ENCODE measurements at regions of chr6 and their contacts with region 1.

Region 1: DNA sequence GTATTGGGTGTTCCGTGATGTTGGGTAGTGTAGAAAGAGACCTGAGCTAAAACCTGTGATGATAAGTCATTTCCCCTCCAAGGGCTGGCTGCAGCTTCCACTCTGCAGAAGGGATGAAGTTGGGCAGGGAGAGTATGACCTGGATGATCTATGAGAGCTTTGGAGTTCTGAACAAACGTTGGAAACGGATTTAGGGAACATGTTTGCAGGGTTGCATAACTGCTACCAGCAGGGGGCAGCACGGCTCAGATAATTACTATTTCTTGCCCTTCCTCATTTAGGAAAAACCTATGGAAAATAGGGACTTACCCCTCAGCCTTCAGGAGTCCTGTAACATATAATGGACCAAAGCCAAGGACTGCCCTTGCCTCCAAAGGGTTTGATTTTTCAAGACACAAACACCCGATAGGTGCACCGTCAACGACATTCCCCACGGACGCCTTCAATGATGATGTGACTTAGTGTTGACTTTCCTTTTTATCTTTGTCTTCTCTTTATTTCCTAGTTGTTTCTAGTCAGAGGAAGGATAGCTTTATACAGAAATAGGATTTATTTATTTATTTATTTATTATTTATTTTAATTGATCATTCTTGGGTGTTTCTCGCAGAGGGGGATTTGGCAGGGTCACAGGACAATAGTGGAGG is 164.9 kb upstream of the SASH1 start:
- DNase-seq: peak; percentile 84
- ATAC-seq: peak; percentile 41

Region 2: DNA sequence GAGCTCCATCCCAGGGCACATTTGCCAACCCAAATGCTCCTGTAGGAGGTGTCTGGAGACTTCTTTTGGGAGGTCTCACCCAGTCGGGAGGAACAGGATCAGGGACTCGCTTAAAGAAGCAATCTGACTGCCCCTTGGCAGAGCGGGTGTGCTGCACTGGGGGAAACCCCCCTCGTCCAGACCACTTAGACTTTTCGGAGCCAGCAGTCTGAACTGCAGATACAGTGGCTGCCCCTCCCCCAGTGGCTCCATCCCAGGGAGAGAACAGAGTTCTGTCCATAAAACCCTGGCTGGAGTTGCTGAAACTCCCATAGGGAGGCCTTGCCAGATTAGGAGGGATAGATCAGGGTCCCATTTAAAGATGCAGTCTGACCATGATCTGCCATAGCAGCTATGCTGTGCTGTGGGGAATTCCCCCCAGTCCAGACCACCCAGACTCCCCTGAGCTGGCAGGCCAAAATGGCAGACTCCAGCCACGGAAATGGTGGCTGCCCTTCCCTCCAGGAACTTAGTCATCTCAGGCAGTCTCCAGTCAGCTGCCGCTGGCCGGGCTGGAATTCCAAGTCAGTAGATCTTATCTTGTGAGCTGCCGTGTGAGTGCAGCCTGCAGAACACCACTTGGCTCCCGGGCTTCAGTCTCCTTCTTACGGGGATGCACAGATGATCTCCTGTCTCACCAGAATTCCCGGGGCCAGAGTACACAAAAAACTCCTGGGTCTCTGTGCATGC is 113.1 kb before region 1 on chr6:
- intact Hi-C with region 1: no loop called
- DNase-seq: no peak
- ATAC-seq: no peak

Region 3: GRCh38 chr6:148203970-148204369 is 26.3 kb after region 1 on chr6:
- intact Hi-C with region 1: no loop called
- DNase-seq: no peak
- ATAC-seq: peak; percentile 45

Region 4: DNA sequence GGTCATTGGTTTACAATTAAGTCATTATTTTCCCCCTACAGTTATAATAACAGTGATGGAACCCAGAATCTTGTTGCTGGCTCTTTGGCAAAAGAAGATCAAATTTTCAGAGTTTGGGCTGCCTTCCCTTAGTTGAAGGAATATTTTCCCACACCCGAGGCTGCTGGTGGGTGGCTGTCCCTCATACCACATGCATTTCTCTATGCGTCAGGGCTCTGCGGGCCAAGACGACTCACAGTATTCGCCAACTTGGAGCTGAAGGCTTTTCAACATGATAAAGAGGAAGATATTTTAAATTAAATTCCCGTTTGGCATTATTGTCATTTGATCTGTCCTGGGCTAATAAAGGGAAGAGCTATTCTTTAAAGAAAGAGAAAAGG is 62.7 kb after region 1 on chr6:
- intact Hi-C with region 1: loop called (anchors 10 kb)
- DNase-seq: peak; percentile 55
- ATAC-seq: peak; percentile 68

Region 5: GRCh38 chr6:148464319-148465010 is 286.8 kb after region 1 on chr6:
- intact Hi-C with region 1: loop called (anchors 5 kb)
- DNase-seq: peak; percentile 59
- ATAC-seq: peak; percentile 75